Activated naive CD4-positive, alpha-beta T cell treated with anti-CD3 and anti-CD28 coated beads for 36 hours (primary cell): ENCODE measurements at regions of chr5 and their contacts with region 1.

Region 1: GRCh38 chr5:97231025-97231636 is 48.1 kb upstream of the RIOK2 start:
- DNase-seq: peak; percentile 55
- H3K4me3 Mint-ChIP-seq: no peak overlapping the region
- H3K27ac Mint-ChIP-seq: no peak overlapping the region
- H3K4me1 Mint-ChIP-seq: no peaks in the 10 kb centered on the region
- H3K27me3 Mint-ChIP-seq: peaks cover 3% of the 10 kb centered on the region

Region 2: GRCh38 chr5:96601811-96602244 is 629.3 kb before region 1 on chr5:
- CTCF ChIA-PET with region 1: no interaction called
- intact Hi-C with region 1: no loop called
- DNase-seq: peak; percentile 68
- H3K4me3 Mint-ChIP-seq: no peak overlapping the region
- H3K27ac Mint-ChIP-seq: no peak overlapping the region
- H3K4me1 Mint-ChIP-seq: peaks cover 10% of the 10 kb centered on the region
- H3K27me3 Mint-ChIP-seq: peaks cover 5% of the 10 kb centered on the region

Region 3: DNA sequence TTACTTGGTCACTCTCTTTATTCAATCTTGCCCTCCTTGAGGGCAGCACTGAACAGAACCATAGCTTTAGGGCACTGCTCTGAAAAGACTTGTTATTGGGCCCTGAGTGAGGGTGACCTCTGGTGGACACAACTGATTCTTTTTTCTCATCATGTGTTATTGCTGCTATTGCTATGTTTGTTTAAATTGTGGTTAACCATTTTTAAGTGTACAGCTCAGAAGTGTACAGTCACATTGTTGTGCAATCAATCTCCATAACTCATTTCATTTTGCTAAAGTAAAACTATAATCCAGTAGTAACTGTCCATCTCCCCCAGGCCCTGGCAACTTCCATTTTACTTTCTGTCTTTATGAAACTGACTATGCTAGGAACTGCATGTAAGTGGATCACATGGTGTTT is 303.0 kb after region 1 on chr5:
- CTCF ChIA-PET with region 1: interaction called, 11 read pairs
- intact Hi-C with region 1: loop called (anchors 1 kb)
- DNase-seq: peak; percentile 18
- H3K4me3 Mint-ChIP-seq: no peak overlapping the region
- H3K27ac Mint-ChIP-seq: no peak overlapping the region
- H3K4me1 Mint-ChIP-seq: no peaks in the 10 kb centered on the region
- H3K27me3 Mint-ChIP-seq: no peaks in the 10 kb centered on the region

Region 4: GRCh38 chr5:97608501-97608900 is 377.4 kb after region 1 on chr5:
- CTCF ChIA-PET with region 1: no interaction called
- intact Hi-C with region 1: no loop called
- DNase-seq: no peak
- H3K4me3 Mint-ChIP-seq: no peak overlapping the region
- H3K27ac Mint-ChIP-seq: no peak overlapping the region
- H3K4me1 Mint-ChIP-seq: no peaks in the 10 kb centered on the region
- H3K27me3 Mint-ChIP-seq: no peaks in the 10 kb centered on the region

Region 5: DNA sequence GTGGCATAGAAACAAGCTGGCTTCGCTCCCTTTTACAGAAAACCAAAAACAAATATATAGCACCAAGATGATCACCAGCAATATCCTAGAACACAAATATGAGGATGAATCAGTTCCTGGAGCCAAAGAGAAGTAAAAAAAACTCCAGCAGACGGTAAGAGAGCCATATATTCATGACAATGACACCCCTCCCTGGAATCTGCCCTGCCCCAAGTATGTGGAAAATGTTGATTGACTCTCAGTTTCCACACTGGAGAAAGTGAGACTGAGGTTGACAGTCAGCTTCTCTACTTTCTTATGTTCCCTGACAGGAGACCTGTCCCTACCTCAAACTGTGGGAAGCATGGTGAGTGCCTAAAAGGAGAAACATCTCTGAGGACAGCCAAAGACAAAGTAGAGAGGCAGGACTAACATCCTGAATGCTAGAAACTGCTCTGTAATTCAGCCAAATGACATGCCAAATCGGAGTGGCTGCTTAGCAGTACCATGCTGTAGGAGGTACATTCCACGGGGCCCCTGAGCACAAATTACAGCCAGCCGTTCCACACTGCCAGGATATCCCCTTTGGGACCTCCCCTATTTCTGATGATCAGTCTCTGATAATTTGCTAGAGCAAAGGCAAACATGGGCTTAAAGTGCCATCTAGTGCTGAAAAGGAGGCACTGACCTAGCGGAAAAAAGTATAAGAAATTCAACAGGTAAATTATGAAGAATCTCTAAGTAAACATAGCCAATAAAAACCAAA is 1118.3 kb after region 1 on chr5:
- CTCF ChIA-PET with region 1: no interaction called
- intact Hi-C with region 1: loop called (anchors 2 kb)
- DNase-seq: no peak
- H3K4me3 Mint-ChIP-seq: no peak overlapping the region
- H3K27ac Mint-ChIP-seq: no peak overlapping the region
- H3K4me1 Mint-ChIP-seq: no peaks in the 10 kb centered on the region
- H3K27me3 Mint-ChIP-seq: peaks cover 2% of the 10 kb centered on the region

Region 6: DNA sequence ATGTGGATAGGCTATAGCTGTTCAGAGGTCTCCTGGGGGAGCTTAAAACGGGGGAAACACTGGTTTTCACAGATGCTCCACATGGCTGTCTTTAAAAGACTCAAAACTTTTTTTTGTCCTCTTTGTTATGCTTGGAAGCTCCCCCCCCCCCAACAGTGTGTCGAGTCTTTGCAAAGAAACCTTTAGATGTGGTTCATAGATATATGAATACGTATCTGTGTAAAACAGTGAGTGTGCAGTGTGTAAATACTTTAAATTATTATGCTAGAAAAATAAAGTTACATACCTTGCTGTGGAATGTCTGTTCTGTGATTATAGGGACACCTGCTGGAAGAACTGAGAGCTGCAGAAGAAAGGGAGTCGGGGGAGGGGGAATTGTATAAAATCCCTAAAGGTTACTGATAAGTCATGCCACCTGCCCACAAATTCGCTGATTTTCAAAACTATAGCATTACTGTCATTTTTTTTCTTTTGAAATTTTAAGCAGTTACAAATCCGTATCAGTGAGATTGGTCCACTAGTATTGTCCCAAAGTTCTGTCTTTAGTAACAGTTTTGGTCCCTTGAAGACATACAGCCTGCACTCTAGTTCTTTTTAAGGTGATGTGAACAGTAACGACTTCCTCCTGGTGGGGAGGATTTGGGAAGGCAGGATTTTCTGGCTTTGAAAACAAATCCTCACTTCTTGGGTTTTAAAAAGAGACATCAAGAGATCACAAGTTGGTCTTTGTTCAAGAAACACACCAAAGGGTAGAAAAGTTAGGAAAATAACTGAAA is 1565.3 kb after region 1 on chr5:
- CTCF ChIA-PET with region 1: interaction called, 7 read pairs
- intact Hi-C with region 1: loop called (anchors 1 kb)
- DNase-seq: peak; percentile 79
- H3K4me3 Mint-ChIP-seq: no peak overlapping the region
- H3K27ac Mint-ChIP-seq: no peak overlapping the region
- H3K4me1 Mint-ChIP-seq: peaks cover 1% of the 10 kb centered on the region
- H3K27me3 Mint-ChIP-seq: no peaks in the 10 kb centered on the region

Region 7: DNA sequence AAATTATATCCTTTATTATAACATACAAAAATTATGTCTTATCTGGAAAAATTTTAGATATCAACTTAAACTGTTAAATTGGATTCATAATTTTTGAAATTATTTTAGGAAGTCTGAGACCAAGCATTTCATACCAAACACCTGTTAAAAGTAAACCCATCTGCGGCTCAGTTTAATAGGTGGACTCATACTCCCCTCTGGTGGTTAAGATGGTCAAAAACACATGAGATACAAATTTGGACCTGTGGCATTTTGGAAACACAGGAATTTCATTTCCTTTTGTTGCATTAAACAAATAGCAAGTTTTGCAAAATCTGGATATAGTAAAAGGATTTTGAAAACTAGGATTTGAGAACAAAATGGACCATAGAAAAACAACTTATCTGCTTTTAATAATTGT is 1596.0 kb after region 1 on chr5:
- CTCF ChIA-PET with region 1: no interaction called
- intact Hi-C with region 1: loop called (anchors 2 kb)
- DNase-seq: peak; percentile 13
- H3K4me3 Mint-ChIP-seq: no peak overlapping the region
- H3K27ac Mint-ChIP-seq: no peak overlapping the region
- H3K4me1 Mint-ChIP-seq: no peaks in the 10 kb centered on the region
- H3K27me3 Mint-ChIP-seq: no peaks in the 10 kb centered on the region

Region 8: DNA sequence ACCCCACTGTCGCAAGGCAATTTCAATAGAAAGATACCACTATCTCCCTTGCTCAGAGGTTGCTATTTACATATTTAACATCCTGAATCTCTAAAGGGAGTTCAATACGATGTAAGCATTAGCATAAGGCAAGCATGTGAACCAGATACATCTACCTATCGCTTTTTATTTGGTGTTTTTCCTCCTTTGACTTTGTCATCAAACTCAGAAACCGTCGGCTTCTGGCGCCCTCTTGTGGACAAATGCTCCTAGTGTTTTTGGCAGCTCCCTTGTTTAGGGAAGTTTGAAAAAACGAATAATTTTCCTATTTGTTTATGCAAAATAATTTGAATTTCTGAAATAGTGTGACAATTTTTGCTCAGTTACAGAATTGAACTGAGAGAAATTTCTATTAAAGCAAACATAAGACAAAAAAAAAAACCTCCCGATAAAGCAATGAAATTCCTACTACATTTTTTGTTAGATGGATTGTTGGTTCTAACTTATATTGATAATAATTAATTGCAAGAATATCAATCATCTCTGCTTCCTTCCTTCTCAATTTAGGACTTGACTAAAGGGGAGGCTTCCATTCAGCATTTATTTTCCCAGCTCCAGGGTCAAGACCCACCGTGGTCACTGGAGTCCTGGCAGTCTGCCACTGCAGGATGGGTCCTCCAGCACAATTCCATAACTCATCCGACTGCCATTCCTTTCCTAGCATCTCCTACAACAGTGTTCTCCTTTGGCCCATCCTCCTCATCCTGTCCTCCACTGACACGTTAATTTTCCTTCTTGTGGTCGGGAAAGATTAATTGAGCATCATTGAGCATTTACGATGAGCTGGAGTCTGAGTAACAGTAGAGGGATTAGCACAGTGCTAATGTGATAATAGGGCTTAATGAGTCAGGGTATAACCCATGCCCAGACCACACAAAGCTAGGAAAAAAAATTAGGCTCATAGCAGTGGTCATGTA is 1829.5 kb after region 1 on chr5:
- CTCF ChIA-PET with region 1: no interaction called
- intact Hi-C with region 1: loop called (anchors 5 kb)
- DNase-seq: peak; percentile 92
- H3K4me3 Mint-ChIP-seq: no peak overlapping the region
- H3K27ac Mint-ChIP-seq: no peak overlapping the region
- H3K4me1 Mint-ChIP-seq: peaks cover 1% of the 10 kb centered on the region
- H3K27me3 Mint-ChIP-seq: no peaks in the 10 kb centered on the region